Psoas muscle (tissue), 8 donors: ENCODE measurements at regions of chr14 and their contacts with region 1.

Region 1: GRCh38 chr14:20350860-20351259 is 7.4 kb downstream of the PARP2 start:
- DNase-seq: no peak
- ATAC-seq: no peak
- H3K4me3 ChIP-seq: no peak overlapping the region
- H3K27ac ChIP-seq: no peak overlapping the region
- H3K4me1 ChIP-seq: no peaks in the 10 kb centered on the region
- H3K27me3 ChIP-seq: no peaks in the 10 kb centered on the region
- CTCF ChIP-seq: no peak

Region 2: GRCh38 chr14:20391505-20391904 is 40.6 kb after region 1 on chr14:
- intact Hi-C with region 1: loop called (anchors 5 kb)
- DNase-seq: no peak
- ATAC-seq: no peak
- H3K4me3 ChIP-seq: no peak overlapping the region
- H3K27ac ChIP-seq: no peak overlapping the region
- H3K4me1 ChIP-seq: no peaks in the 10 kb centered on the region
- H3K27me3 ChIP-seq: no peaks in the 10 kb centered on the region
- CTCF ChIP-seq: no peak

Region 3: DNA sequence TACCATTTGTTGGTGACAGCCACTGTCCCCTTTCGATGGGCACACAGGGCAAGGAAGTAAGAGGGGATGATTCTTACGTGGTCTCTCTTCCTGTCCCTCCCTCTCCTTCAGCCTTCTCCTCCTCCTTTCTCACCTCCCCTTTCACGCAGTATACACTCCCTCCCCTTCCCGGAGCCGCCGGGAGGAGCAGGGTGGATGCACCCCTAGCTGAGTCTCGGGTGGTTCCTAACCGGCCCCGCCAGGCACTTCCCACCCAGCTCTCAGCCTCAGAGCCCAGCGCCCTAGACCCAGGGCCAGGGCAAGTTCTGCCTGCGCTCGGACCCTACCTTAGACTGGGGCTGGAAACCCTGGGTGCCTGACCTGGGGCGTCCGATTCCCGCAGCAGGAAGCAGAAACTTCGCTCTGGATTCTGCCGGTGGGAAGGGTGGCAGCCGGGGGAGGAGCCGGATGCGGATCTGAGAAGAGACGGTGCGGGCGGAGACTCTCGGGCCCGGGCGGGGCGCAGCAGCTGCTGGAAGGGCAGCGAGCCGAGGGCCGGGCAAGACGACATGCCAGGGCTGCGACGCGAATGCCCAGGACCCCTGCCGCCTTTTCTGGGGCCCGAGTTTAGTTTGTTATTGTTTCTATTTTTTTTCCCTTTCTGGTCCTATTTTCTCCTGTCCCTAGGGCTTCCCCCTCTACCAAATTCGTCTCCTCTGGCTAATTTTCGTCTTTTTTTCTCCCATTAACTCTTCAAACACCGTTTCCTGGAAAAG is 62.4 kb after region 1 on chr14 and contains the start of gene TEP1:
- intact Hi-C with region 1: loop called (anchors 5 kb)
- DNase-seq: peak; percentile 91 to 94
- ATAC-seq: peak; percentile 89 to 95 (median 92)
- H3K4me3 ChIP-seq: peak within 1 kb of the TSS; percentile 92
- H3K27ac ChIP-seq: peak within 1 kb of the TSS; percentile 100
- H3K4me1 ChIP-seq: peaks cover 31% of the 10 kb centered on the region
- H3K27me3 ChIP-seq: no peaks in the 10 kb centered on the region
- CTCF ChIP-seq: no peak
- total RNA-seq, gene TEP1: 14.7 to 44.8 (median 21.2) TPM

Region 4: GRCh38 chr14:20560961-20561360 is 210.1 kb after region 1 on chr14 and contains the start of gene RNASE9:
- intact Hi-C with region 1: no loop called
- DNase-seq: no peak
- ATAC-seq: no peak
- H3K4me3 ChIP-seq: no peak within 1 kb of the TSS
- H3K27ac ChIP-seq: no peak within 1 kb of the TSS
- H3K4me1 ChIP-seq: no peaks in the 10 kb centered on the region
- H3K27me3 ChIP-seq: peaks cover 0 to 2% (median 2%) of the 10 kb centered on the region in 3 donors
- CTCF ChIP-seq: no peak
- total RNA-seq, gene RNASE9: not detected